ENCODE measurements at regions of chr3 and their contacts with region 1.

Region 1: GRCh38 chr3:49638445-49638844 is 35.7 kb upstream of the APEH start:
- DNase-seq: peak; percentile 78
- ATAC-seq: peak; percentile 98
- H3K4me3 ChIP-seq: no peak overlapping the region
- H3K27ac ChIP-seq: no peak overlapping the region
- H3K4me1 ChIP-seq: peaks cover 8% of the 10 kb centered on the region
- H3K27me3 ChIP-seq: no peaks in the 10 kb centered on the region
- CTCF ChIP-seq: no peak

Region 2: DNA sequence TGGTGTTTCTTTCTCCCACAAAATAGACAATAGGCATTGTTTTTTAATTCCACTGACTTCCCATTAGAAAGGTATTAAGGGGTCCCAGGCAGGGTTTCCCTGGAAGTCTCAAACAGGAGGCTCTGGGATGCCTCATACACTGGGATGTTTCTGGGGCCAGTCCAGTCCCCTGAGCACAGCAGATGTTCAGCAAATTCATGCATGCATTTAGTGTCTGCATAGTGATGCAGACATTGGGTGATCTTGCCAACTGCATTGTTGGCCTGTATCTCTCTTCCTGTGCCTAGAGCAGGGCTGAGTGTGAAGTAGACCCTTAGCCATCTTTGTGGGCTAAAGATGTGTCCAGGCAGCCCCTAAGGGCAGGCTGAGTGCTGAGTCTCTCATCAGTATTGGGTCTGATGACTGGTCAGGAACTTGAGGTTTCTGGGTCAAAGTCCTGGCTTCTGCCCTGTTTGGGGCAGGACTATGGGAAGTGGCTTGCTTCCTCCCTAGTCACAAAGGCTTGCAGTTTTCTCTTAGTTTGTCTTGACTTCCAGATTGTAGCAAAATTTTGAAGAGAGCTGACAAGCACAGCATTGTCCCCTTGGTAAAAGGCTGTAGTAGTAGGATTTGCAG is 27.7 kb before region 1 on chr3:
- CTCF ChIA-PET with region 1: no interaction called
- POLR2A ChIA-PET with region 1: no interaction called
- intact Hi-C with region 1: loop called (anchors 1 kb)
- DNase-seq: no peak
- ATAC-seq: 0 out of 2 replicates have a peak, but pooled peaks have one; percentile 12
- H3K4me3 ChIP-seq: no peak overlapping the region
- H3K27ac ChIP-seq: no peak overlapping the region
- H3K4me1 ChIP-seq: no peaks in the 10 kb centered on the region
- H3K27me3 ChIP-seq: no peaks in the 10 kb centered on the region
- CTCF ChIP-seq: no peak

Region 3: GRCh38 chr3:49626101-49626581 is 12.3 kb before region 1 on chr3:
- CTCF ChIA-PET with region 1: no interaction called
- POLR2A ChIA-PET with region 1: no interaction called
- intact Hi-C with region 1: no loop called
- DNase-seq: no peak
- ATAC-seq: no peak; the same call in 1 of the 2 replicates
- H3K4me3 ChIP-seq: no peak overlapping the region
- H3K27ac ChIP-seq: no peak overlapping the region
- H3K4me1 ChIP-seq: peaks cover 10% of the 10 kb centered on the region; the same call in 1 of the 2 replicates
- H3K27me3 ChIP-seq: no peaks in the 10 kb centered on the region
- CTCF ChIP-seq: no peak

Region 4: GRCh38 chr3:49747792-49748480 is 109.5 kb after region 1 on chr3:
- CTCF ChIA-PET with region 1: no interaction called
- POLR2A ChIA-PET with region 1: no interaction called
- intact Hi-C with region 1: no loop called
- DNase-seq: peak; percentile 17
- ATAC-seq: 0 out of 2 replicates have a peak, but pooled peaks have one; percentile 15
- H3K4me3 ChIP-seq: no peak overlapping the region
- H3K27ac ChIP-seq: no peak overlapping the region
- H3K4me1 ChIP-seq: peaks cover 4% of the 10 kb centered on the region
- H3K27me3 ChIP-seq: no peaks in the 10 kb centered on the region
- CTCF ChIP-seq: no peak

Measured in PC-3 (cell line).